Mammary epithelial cell (primary cell): ENCODE measurements at regions of chr7 and their contacts with region 1.

Region 1: GRCh38 chr7:22452142-22452959 is 47.6 kb downstream of the STEAP1B start:
- DNase-seq: no peak
- H3K4me3 ChIP-seq: no peak overlapping the region
- H3K27ac ChIP-seq: no peak overlapping the region
- H3K4me1 ChIP-seq: no peaks in the 10 kb centered on the region
- H3K27me3 ChIP-seq: no peaks in the 10 kb centered on the region
- CTCF ChIP-seq: peak; percentile 45 to 74

Region 2: DNA sequence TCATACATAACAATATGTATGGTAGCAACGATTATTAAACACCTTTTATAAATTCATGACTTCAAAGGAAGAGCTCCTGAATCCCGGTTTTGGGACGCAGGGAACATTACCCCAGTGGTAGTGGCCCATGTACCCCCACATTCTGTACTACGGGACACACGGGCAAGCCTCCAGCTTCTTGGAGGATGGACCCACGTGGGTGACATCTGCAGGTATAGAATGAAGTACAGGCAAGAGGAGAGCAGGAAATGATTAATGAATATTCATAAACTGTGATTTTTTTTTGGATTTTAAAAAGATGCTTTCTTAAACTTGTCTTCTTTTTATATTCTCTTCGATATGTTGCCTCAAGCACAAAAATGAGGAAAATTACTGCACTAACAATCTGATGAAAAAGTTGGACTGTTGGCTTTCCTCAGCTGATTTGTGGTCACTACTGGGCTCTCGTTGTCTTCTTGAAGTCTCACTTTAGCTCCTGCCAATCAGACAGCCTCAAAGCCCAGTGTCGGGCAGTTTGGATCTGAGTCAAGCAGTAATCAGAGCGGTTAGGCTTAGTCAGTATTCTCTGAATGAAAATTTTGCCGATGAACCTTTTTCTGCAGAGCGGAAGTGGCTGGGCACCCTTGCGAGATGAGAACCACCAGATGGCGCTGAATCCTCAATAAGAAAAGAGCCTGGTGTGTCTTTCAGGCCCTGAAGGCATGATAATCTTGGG is 348.9 kb before region 1 on chr7:
- CTCF ChIA-PET with region 1: no interaction called
- dilution Hi-C with region 1: loop called (anchors 25 kb)
- in situ Hi-C with region 1: no loop called
- intact Hi-C with region 1: no loop called
- DNase-seq: peak; percentile 87
- H3K4me3 ChIP-seq: no peak overlapping the region
- H3K27ac ChIP-seq: no peak overlapping the region
- H3K4me1 ChIP-seq: no peaks in the 10 kb centered on the region
- H3K27me3 ChIP-seq: no peaks in the 10 kb centered on the region
- CTCF ChIP-seq: peak; percentile 62 to 81

Region 3: DNA sequence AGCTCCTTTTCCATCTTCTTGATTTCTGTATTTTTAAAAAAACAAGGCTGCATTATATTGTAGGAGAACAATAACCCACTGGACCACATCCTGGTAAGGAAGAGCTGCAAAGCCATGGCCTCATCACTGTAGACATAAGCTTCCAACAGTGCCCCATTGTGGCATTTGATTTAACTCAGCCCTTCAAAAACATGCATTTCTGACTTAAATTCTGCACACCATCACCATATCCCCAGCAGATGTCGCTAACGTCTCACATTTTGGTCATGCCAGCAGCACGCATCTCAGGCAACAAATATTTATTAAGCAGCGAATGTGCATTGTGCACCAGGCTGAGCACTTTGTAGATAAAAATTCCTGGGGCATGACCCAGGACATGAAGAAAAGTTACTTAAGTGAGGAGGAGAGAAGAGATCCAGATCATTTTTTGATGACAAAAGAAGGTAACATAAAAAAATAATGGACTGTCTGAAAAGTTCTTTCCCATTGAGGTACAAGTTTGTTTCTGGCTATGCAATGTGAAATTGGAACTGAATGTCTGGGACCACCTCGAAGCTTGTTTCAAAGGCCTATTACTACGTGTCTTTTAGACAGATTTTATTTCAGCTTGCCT is 342.0 kb before region 1 on chr7:
- CTCF ChIA-PET with region 1: no interaction called
- dilution Hi-C with region 1: loop called (anchors 25 kb)
- in situ Hi-C with region 1: no loop called
- intact Hi-C with region 1: loop called (anchors 1 kb)
- DNase-seq: peak; percentile 66
- H3K4me3 ChIP-seq: no peak overlapping the region
- H3K27ac ChIP-seq: no peak overlapping the region
- H3K4me1 ChIP-seq: no peaks in the 10 kb centered on the region
- H3K27me3 ChIP-seq: no peaks in the 10 kb centered on the region
- CTCF ChIP-seq: peak; percentile 79 to 86

Region 4: DNA sequence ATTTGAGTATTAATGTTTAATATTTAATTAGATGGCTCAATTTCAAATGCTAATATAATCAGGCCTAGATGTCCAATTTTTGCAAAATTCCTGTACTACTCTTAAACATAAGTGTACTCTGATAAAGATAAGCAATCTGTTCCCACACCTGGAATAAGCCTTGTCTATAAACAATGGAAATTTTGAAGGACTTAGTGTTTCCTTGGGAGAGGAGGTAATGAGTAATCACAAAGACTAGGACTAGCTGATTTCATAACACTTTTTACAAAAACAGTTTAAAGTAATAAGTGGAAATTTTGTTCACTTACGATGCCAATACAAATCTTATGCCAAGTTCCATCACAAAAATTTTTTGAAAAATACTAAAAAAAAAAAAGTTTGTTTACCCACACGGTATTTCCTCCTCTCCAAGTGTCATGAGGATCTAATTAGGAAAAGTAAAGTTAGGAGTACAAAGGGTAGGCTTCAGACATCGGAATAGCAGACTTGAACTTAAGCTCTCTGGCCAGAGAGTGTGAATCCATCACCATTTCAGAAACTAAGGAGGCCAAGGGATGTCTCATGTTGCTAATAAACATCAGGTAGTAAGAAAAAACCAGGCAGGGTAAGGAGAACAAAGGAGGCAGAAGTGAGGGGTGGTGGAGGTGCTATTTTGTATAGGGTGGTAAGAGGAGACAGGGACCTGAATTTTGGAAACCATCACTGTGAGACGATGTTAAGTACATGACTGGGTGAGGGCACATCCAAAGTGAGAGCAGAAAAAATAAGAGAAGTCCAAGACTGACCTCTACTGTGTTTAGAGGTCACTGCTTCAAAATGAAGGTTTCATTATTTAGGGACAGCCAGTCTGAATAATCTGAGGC is 156.7 kb before region 1 on chr7:
- CTCF ChIA-PET with region 1: no interaction called
- dilution Hi-C with region 1: no loop called
- in situ Hi-C with region 1: no loop called
- intact Hi-C with region 1: loop called (anchors 1 kb)
- DNase-seq: peak; percentile 15
- H3K4me3 ChIP-seq: no peak overlapping the region
- H3K27ac ChIP-seq: no peak overlapping the region
- H3K4me1 ChIP-seq: no peaks in the 10 kb centered on the region
- H3K27me3 ChIP-seq: no peaks in the 10 kb centered on the region
- CTCF ChIP-seq: no peak

Region 5: GRCh38 chr7:22356701-22357353 is 95.5 kb before region 1 on chr7 and contains the start of gene RAPGEF5:
- CTCF ChIA-PET with region 1: no interaction called
- dilution Hi-C with region 1: no loop called
- in situ Hi-C with region 1: loop called in 1 of 2 experiments (anchors 10 kb)
- intact Hi-C with region 1: loop called (anchors 1 kb)
- DNase-seq: peak; percentile 66
- H3K4me3 ChIP-seq: peak within 1 kb of the TSS; percentile 63 to 69 (median 66)
- H3K27ac ChIP-seq: peak within 1 kb of the TSS; percentile 76
- H3K4me1 ChIP-seq: peaks cover 20% of the 10 kb centered on the region
- H3K27me3 ChIP-seq: no peaks in the 10 kb centered on the region
- CTCF ChIP-seq: no peak
- total RNA-seq, gene RAPGEF5: 6.0 to 7.1 TPM

Region 6: GRCh38 chr7:22402250-22402649 is 50.1 kb before region 1 on chr7:
- CTCF ChIA-PET with region 1: no interaction called
- dilution Hi-C with region 1: no loop called
- in situ Hi-C with region 1: no loop called
- intact Hi-C with region 1: loop called (anchors 5 kb)
- DNase-seq: no peak
- H3K4me3 ChIP-seq: no peak overlapping the region
- H3K27ac ChIP-seq: no peak overlapping the region
- H3K4me1 ChIP-seq: peaks cover 12% of the 10 kb centered on the region
- H3K27me3 ChIP-seq: no peaks in the 10 kb centered on the region
- CTCF ChIP-seq: no peak

Region 7: DNA sequence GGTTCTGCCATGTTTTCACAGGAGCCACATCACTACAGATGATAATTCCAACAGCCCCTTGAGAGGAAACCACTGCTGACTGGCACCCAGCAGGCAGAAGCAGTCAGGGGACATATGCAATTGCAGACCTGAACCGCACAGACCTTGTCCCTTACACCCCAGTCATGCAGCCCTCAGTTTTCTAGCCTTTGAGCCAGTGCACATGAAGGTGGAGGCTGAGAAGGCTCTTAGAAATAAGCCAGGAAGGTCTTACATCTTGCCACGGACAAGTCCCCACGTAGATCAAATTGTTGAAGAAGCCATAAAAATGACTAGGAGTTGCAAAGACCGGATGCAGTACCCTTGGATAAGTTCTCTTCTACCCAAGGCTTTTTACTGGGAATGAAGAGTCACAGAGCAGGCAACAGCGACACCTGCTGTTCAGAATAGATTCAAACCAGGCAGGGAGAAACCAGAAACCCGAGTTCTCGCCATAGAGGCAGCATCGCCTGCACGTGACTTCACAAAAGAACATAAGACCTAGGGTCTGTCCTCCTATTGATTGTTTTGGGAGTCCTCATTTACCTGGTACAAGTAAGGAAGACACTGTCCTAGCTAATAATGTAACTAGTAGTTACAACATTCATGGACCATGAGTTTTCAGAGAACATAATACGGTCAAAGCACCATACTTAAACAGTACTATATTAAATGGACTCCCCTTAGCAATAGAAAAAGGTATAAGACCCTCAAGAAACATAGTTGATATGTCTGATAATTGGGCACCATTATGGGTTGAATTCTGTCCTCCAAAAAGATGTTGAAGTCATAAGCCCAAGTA is 36.5 kb after region 1 on chr7:
- CTCF ChIA-PET with region 1: no interaction called
- dilution Hi-C with region 1: no loop called
- in situ Hi-C with region 1: no loop called
- intact Hi-C with region 1: loop called (anchors 2 kb)
- DNase-seq: peak; percentile 54
- H3K4me3 ChIP-seq: no peak overlapping the region
- H3K27ac ChIP-seq: no peak overlapping the region
- H3K4me1 ChIP-seq: no peaks in the 10 kb centered on the region
- H3K27me3 ChIP-seq: no peaks in the 10 kb centered on the region
- CTCF ChIP-seq: peak; percentile 79 to 88